CD8-positive, alpha-beta T cell (primary cell): ENCODE measurements at regions of chr4 and their contacts with region 1.

Region 1: GRCh38 chr4:16026160-16026761 is 57.6 kb downstream of the PROM1 start:
- DNase-seq: peak in 3 of 9 experiments; percentile 39 to 73 (median 64)
- ATAC-seq: no peak
- H3K4me3 ChIP-seq: no peak overlapping the region
- H3K4me3 Mint-ChIP-seq: no peak overlapping the region
- H3K27ac ChIP-seq: no peak overlapping the region
- H3K27ac Mint-ChIP-seq: no peak overlapping the region
- H3K4me1 ChIP-seq: no peaks in the 10 kb centered on the region
- H3K4me1 Mint-ChIP-seq: no peaks in the 10 kb centered on the region
- H3K27me3 ChIP-seq: peaks cover 2 to 4% of the 10 kb centered on the region in 2 experiments
- H3K27me3 Mint-ChIP-seq: peaks cover 5% of the 10 kb centered on the region
- CTCF ChIP-seq: peak; percentile 94

Region 2: DNA sequence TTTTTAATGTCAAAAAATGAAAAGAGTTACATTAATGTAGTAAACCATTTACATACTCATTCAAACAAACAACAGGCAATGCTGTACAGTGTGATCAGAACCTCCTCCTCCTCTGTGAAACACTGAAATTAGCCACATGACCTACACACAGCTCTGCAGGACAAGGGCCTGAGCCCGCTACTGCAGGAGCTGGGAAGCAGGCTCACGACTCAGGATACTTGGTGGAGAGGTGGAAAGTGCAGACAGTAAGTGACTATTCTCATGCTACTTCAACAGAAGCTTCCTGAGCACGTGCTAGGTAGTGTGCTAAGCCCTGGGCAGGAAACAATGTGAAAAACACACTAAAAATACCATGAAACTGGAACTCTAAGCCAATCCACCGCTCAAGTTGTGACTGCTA is 143.2 kb after region 1 on chr4:
- CTCF ChIA-PET with region 1: no interaction called
- POLR2A ChIA-PET with region 1: no interaction called
- intact Hi-C with region 1: no loop called
- DNase-seq: no peak
- ATAC-seq: no peak
- H3K4me3 ChIP-seq: no peak overlapping the region
- H3K4me3 Mint-ChIP-seq: no peak overlapping the region
- H3K27ac ChIP-seq: no peak overlapping the region
- H3K27ac Mint-ChIP-seq: no peak overlapping the region
- H3K4me1 ChIP-seq: no peaks in the 10 kb centered on the region
- H3K4me1 Mint-ChIP-seq: no peaks in the 10 kb centered on the region
- H3K27me3 ChIP-seq: no peaks in the 10 kb centered on the region
- H3K27me3 Mint-ChIP-seq: no peaks in the 10 kb centered on the region
- CTCF ChIP-seq: no peak

Region 3: DNA sequence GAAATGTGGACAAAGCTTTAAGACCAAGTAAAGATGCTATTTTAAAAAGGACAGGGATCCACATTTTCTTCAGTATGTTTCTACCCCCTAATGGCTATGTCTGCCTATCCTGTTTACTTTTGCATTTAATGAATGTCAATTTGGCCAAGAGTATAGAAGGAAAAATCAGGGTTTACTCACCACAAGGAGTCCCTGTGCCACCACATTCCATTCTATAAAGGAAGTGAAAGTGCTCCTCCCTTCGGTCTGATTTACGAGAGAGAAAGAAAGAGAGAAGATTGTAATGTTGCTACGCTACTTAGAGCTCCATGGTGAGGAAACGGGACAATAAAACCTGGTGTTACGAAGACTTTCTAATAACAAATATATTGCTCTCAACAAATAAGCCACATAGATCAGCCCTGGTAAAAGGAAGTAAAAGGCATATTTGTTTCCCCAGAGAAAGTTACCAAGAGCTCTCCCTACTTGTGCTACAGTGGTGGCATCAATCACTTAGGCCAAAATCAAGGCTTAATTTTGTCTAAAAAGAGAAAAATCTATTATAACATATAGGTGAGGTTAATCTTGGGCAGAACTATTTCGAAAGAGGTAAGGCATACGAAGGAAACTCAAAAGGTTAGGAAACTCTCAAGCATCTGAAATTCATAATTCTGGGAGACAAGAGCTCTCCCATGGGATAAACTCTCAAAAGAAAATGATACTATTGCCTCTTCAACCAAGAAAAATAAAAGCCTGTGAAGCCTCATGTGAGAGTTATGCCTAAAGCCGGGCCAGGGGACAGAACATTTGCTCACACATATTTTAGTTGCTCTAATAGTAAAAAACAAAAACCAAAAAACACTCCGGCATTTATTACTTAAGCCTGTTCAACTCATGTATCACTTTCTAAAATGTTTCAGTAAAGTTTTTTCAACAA is 170.5 kb after region 1 on chr4:
- CTCF ChIA-PET with region 1: no interaction called
- POLR2A ChIA-PET with region 1: no interaction called
- intact Hi-C with region 1: loop called (anchors 2 to 5 kb)
- DNase-seq: peak in 1 of 9 experiments; percentile 25
- ATAC-seq: no peak
- H3K4me3 ChIP-seq: no peak overlapping the region
- H3K4me3 Mint-ChIP-seq: no peak overlapping the region
- H3K27ac ChIP-seq: no peak overlapping the region
- H3K27ac Mint-ChIP-seq: no peak overlapping the region
- H3K4me1 ChIP-seq: no peaks in the 10 kb centered on the region
- H3K4me1 Mint-ChIP-seq: peaks cover 25% of the 10 kb centered on the region
- H3K27me3 ChIP-seq: no peaks in the 10 kb centered on the region
- H3K27me3 Mint-ChIP-seq: no peaks in the 10 kb centered on the region
- CTCF ChIP-seq: no peak

Region 4: GRCh38 chr4:16264798-16265197 is 238.5 kb after region 1 on chr4:
- CTCF ChIA-PET with region 1: interaction called, 45 read pairs
- POLR2A ChIA-PET with region 1: no interaction called
- intact Hi-C with region 1: loop called (anchors 1 kb)
- DNase-seq: peak in 2 of 9 experiments; percentile 50 to 63
- ATAC-seq: no peak
- H3K4me3 ChIP-seq: no peak overlapping the region
- H3K4me3 Mint-ChIP-seq: no peak overlapping the region
- H3K27ac ChIP-seq: no peak overlapping the region
- H3K27ac Mint-ChIP-seq: no peak overlapping the region
- H3K4me1 ChIP-seq: no peaks in the 10 kb centered on the region
- H3K4me1 Mint-ChIP-seq: peaks cover 6% of the 10 kb centered on the region
- H3K27me3 ChIP-seq: no peaks in the 10 kb centered on the region
- H3K27me3 Mint-ChIP-seq: no peaks in the 10 kb centered on the region
- CTCF ChIP-seq: peak; percentile 69

Region 5: DNA sequence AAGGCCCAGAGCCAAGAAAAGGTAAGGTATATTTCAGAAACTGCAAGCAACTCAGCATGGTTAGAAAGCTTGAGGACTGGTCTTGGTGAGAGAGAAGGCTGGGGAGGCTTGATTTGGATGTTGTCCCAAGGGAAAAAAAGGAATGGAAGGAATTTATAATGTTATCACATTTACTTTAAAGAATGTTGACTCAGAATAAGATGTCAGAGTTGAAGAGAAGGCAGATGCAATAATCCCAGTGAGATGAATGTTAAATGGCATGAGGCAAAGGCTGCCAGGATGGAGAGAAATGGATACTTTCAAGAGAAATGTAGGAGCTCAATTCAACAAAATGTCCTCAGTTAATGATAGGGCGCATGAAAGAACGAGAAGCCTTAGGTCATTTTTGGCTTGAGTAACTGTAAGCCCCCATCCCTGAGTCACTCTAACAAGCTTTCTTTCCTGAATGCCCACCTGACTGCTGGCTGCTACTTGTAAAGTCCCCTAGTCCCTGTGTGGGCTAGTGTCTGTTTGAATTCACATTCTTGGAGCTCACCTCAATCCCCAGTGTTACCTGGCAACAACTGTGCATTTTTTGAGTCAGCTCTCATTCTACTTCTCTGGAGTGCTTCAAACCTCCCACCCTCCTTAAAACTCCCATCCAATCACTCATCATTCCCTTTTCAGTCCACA is 303.0 kb after region 1 on chr4:
- CTCF ChIA-PET with region 1: no interaction called
- POLR2A ChIA-PET with region 1: no interaction called
- intact Hi-C with region 1: no loop called
- DNase-seq: no peak
- ATAC-seq: no peak
- H3K4me3 ChIP-seq: no peak overlapping the region
- H3K4me3 Mint-ChIP-seq: no peak overlapping the region
- H3K27ac ChIP-seq: no peak overlapping the region
- H3K27ac Mint-ChIP-seq: no peak overlapping the region
- H3K4me1 ChIP-seq: no peaks in the 10 kb centered on the region
- H3K4me1 Mint-ChIP-seq: no peaks in the 10 kb centered on the region
- H3K27me3 ChIP-seq: no peaks in the 10 kb centered on the region
- H3K27me3 Mint-ChIP-seq: peaks cover 4% of the 10 kb centered on the region
- CTCF ChIP-seq: no peak

Region 6: DNA sequence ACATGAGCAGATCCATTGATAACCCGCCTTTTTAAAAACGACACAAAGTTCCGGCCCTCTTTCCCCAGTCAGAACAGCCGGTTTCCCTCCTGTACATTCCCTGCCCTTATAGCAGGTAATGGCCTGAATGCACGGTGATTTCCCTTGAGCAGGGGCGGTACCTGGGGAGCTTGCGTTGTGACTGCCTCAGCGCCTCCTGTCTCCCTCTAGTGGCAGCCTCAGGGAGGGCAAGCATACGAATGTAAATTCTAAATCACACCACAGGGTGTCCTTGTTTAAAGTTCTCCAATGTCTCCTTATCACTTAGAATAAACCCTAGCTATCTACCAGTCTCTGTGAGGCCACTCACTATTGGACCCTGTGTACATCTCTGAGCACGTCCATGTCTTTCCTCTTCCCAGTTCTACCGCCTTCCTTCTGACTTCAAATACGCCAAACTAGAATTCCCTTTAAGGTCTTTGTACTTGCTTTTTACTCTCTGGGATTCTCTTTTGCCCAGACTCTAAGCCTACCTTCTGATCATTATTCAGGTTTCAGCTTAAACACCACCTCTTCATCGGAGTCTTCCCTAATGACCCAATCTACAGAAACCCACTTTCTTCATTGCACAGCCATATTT is 890.6 kb after region 1 on chr4:
- CTCF ChIA-PET with region 1: no interaction called
- POLR2A ChIA-PET with region 1: no interaction called
- intact Hi-C with region 1: loop called in 1 of 2 experiments (anchors 2 kb)
- DNase-seq: peak; percentile 39 to 83 (median 65)
- ATAC-seq: peak; percentile 95
- H3K4me3 ChIP-seq: no peak overlapping the region
- H3K4me3 Mint-ChIP-seq: no peak overlapping the region
- H3K27ac ChIP-seq: no peak overlapping the region
- H3K27ac Mint-ChIP-seq: no peak overlapping the region
- H3K4me1 ChIP-seq: no peaks in the 10 kb centered on the region
- H3K4me1 Mint-ChIP-seq: peaks cover 3% of the 10 kb centered on the region
- H3K27me3 ChIP-seq: no peaks in the 10 kb centered on the region
- H3K27me3 Mint-ChIP-seq: peaks cover 2% of the 10 kb centered on the region
- CTCF ChIP-seq: peak; percentile 80

Region 7: DNA sequence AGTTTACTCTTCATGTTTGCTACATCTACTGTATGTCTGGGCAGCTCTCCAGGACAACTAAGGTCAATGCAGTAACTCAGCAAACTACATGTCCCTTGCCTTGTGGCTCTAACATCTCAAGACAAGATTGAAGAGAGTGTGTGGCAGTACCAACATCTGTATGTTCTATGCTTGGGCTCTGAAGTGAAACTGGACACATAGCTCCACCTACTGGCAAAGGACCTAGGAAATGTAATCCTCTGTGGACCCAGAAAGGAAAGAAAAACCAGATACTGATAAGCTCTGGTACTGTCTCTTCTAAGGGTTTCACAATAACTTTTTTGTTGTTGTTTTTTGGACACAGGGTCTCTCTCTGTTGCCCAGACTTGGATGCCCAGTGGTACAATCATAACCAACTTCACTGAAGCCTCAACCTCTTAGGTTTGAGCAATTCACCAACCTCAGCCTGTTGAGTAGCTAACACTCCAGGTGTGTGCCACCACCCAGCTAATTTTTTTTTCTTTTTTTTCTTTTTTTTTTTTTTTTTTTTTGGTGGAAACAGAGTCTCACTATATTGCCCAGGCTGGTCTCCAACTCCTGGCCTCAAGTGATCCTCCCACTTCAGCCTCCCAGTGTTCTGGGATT is 1421.5 kb after region 1 on chr4:
- CTCF ChIA-PET with region 1: no interaction called
- POLR2A ChIA-PET with region 1: no interaction called
- intact Hi-C with region 1: loop called in 1 of 2 experiments (anchors 2 kb)
- DNase-seq: peak; percentile 5 to 73 (median 44)
- ATAC-seq: peak; percentile 66
- H3K4me3 ChIP-seq: no peak overlapping the region
- H3K4me3 Mint-ChIP-seq: no peak overlapping the region
- H3K27ac ChIP-seq: no peak overlapping the region
- H3K27ac Mint-ChIP-seq: no peak overlapping the region
- H3K4me1 ChIP-seq: no peaks in the 10 kb centered on the region
- H3K4me1 Mint-ChIP-seq: no peaks in the 10 kb centered on the region
- H3K27me3 ChIP-seq: no peaks in the 10 kb centered on the region
- H3K27me3 Mint-ChIP-seq: no peaks in the 10 kb centered on the region
- CTCF ChIP-seq: peak; percentile 71

Region 8: GRCh38 chr4:17823871-17824669 is 1797.8 kb after region 1 on chr4:
- CTCF ChIA-PET with region 1: no interaction called
- POLR2A ChIA-PET with region 1: no interaction called
- intact Hi-C with region 1: no loop called
- DNase-seq: no peak
- ATAC-seq: no peak
- H3K4me3 ChIP-seq: no peak overlapping the region
- H3K4me3 Mint-ChIP-seq: no peak overlapping the region
- H3K27ac ChIP-seq: no peak overlapping the region
- H3K27ac Mint-ChIP-seq: no peak overlapping the region
- H3K4me1 ChIP-seq: no peaks in the 10 kb centered on the region
- H3K4me1 Mint-ChIP-seq: peaks cover 3% of the 10 kb centered on the region
- H3K27me3 ChIP-seq: no peaks in the 10 kb centered on the region
- H3K27me3 Mint-ChIP-seq: no peaks in the 10 kb centered on the region
- CTCF ChIP-seq: no peak